ENCODE measurements at regions of chr20 and their contacts with region 1.

Region 1: DNA sequence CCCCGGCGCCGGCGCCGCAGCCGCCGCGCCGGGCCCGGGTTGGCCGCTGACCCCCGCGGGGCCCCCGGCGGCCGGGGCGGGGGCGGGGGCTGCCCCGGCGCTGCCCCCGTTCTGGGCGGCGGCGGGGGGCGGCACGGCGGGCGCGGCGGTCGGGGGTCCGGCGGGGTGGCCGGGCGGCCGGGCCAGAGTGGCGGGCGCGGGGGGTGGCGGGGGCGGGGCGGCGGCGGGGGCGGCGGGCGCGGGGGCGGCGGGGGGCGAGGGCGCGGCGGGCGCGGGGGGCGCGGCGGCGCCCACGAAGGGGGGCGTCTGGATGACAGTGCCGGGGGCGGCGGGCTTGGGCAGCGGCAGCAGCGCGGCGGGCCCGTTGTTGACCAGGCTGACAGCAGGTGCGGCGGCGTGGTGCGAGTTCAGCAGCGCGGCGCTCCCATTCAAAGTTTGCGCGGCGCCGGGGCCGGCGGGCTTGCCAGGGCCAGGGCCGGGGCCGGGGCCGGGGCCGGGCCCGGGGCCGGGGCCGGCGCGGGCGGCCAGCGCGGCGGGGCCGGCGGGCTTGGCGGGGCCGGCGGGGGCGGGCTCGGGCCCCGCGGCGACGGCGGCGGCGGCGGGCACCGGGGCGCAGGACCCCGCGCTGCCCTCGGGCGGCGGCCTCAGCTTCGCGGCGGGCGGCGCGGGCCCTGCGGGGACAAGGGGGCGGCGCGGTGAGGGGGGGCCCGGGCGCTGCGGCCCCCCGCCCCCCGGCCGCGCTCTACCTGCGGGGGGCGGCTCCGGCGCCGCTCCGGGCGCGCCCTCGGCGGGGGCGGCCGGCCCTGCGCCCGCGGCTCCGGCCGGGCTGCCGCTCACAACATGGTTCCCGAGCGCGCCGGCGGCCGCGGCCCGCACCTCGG is 653 bp downstream of the TAF4 start:
- DNase-seq: no peak
- ATAC-seq: peak; percentile 13
- H3K4me3 ChIP-seq: peak overlapping the region; percentile 100
- H3K27ac ChIP-seq: peak overlapping the region; percentile 85; the same call in 1 of the 2 replicates
- H3K4me1 ChIP-seq: peaks cover 16% of the 10 kb centered on the region
- H3K27me3 ChIP-seq: no peaks in the 10 kb centered on the region
- CTCF ChIP-seq: no peak
- POLR2A ChIP-seq: no peak
- RAD21 ChIP-seq: no peak

Region 2: DNA sequence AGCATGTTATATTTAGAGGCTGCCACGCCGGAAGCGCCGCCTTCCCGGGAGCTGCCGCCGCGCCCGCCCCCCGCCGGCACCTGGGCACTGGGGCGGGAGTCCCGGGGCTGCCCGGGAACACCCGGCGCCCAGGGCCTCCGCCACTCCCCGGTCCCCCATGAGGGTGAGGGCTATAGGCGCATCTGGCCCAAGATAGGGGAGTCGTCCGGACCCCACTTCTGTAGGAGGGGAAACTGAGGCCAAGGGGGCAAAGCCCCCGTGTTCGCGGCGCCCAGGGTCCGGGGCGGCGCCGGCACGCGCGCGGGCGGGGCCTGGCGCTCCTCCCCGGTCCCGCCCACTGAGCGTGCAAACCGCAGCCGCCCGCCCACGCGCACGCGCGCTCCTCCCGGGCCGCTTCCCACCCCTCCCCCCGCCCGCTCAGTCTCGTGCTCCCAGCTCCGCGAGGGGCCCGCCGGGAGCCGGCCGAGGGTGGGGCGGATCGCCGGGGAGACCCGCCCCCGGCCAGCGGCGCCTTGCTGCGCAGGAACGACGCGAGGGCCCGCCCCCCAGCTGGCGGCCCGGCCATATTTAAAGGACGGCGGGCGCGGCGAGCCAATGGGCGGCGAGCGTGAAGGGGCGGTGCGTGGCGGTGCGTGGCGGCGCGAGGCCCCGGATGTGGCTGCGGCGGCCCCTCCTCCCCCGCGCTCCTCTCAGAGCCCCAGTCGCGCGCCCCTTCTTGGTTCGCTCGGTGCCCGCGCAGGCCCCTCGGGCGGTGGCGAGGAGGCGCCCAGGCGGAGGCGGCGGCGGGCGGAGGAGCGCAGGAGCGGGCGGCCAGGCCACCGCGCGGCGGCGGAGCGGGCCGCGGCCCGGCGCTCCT is 57.0 kb after region 1 on chr20 and contains the start of gene LSM14B:
- CTCF ChIA-PET with region 1: no interaction called
- POLR2A ChIA-PET with region 1: no interaction called
- dilution Hi-C with region 1: no loop called
- in situ Hi-C with region 1: no loop called
- intact Hi-C with region 1: loop called (anchors 1 kb)
- DNase-seq: peak; percentile 95
- ATAC-seq: peak; percentile 94
- H3K4me3 ChIP-seq: peak within 1 kb of the TSS; percentile 100
- H3K27ac ChIP-seq: peak within 1 kb of the TSS; percentile 82
- H3K4me1 ChIP-seq: peaks cover 11% of the 10 kb centered on the region
- H3K27me3 ChIP-seq: peaks cover 21% of the 10 kb centered on the region
- CTCF ChIP-seq: 0 out of 2 replicates have a peak, but pooled peaks have one; percentile 1
- POLR2A ChIP-seq: no peak
- RAD21 ChIP-seq: no peak
- total RNA-seq, gene LSM14B: 23.7 and 30.6 TPM in 2 replicates